ENCODE measurements at regions of chr1 and their contacts with region 1.

Region 1: DNA sequence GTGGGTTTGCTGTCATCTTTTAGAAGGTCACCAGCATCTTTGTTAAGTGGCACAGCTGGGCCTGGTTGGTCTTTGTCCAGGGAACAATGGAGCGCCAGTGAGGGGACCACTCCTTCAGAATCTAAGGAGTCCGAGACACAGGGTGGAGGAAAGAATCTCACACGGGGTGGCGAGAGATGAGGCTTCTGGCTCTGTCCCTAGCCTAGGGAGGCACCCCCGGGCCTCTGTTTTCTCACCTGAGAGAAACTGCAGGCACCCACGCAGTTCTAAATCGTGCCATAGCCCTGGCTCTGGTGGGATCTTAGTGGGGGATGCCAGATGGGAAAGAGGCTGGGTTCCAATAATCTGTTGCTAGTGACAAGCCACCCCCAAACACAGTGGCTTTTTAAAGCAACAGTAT is 10.9 kb upstream of the PLA2G2E start:
- DNase-seq: no peak
- H3K4me3 ChIP-seq: no peak overlapping the region
- H3K27ac ChIP-seq: no peak overlapping the region
- H3K4me1 ChIP-seq: no peaks in the 10 kb centered on the region
- H3K27me3 ChIP-seq: no peaks in the 10 kb centered on the region
- CTCF ChIP-seq: no peak

Region 2: GRCh38 chr1:20008391-20008841 is 74.1 kb after region 1 on chr1:
- CTCF ChIA-PET with region 1: no interaction called
- dilution Hi-C with region 1: loop called (anchors 5 kb)
- in situ Hi-C with region 1: no loop called
- intact Hi-C with region 1: no loop called
- DNase-seq: peak; percentile 11
- H3K4me3 ChIP-seq: no peak overlapping the region
- H3K27ac ChIP-seq: no peak overlapping the region
- H3K4me1 ChIP-seq: no peaks in the 10 kb centered on the region
- H3K27me3 ChIP-seq: no peaks in the 10 kb centered on the region
- CTCF ChIP-seq: no peak

Region 3: DNA sequence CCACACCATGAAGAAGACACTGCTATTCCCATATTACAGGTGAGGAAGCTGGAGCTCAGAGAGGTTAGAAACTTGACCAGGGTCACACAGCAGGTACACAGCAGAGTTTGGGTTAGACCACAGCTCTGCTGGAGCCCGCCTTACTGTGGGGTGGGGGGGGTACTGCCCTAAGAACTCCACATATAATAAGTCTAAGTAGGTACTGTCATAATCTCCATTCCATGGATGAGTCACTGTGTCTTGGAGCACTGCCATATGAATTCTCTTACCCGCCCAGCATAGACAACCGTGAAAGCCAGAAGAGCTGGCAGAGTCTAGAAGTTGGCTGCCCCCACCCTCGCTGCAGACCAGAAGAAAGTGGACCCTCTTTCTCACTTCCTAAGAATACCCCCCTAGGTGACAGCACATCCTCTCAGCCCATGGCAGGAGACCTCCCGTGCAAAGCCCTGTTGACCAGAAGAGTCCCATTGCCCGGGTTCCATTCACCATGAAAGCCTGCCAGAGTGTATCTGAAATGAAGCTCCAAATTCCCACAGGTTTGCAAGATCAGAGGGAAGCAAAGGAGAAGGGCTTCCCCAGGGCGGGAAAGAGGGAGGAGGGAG is 190.2 kb after region 1 on chr1:
- CTCF ChIA-PET with region 1: no interaction called
- dilution Hi-C with region 1: no loop called
- in situ Hi-C with region 1: no loop called
- intact Hi-C with region 1: no loop called
- DNase-seq: peak; percentile 91
- H3K4me3 ChIP-seq: no peak overlapping the region
- H3K27ac ChIP-seq: peak overlapping the region; percentile 36
- H3K4me1 ChIP-seq: peaks cover 11% of the 10 kb centered on the region
- H3K27me3 ChIP-seq: no peaks in the 10 kb centered on the region
- CTCF ChIP-seq: no peak